Ovary (tissue), 10 donors: ENCODE measurements at regions of chr14 and their contacts with region 1.

Region 1: GRCh38 chr14:104768437-104769323 is 15.7 kb downstream of the SIVA1 start:
- DNase-seq: peak; percentile 84 to 93 (median 91)
- H3K4me3 ChIP-seq: no peak overlapping the region
- H3K27ac ChIP-seq: peak overlapping the region in 1 of 2 donors; percentile 57
- H3K4me1 ChIP-seq: peaks cover 2% of the 10 kb centered on the region
- H3K27me3 ChIP-seq: no peaks in the 10 kb centered on the region
- CTCF ChIP-seq: peak; percentile 73 to 95 (median 83)
- EP300 ChIP-seq: no peak
- POLR2A ChIP-seq: no peak

Region 2: DNA sequence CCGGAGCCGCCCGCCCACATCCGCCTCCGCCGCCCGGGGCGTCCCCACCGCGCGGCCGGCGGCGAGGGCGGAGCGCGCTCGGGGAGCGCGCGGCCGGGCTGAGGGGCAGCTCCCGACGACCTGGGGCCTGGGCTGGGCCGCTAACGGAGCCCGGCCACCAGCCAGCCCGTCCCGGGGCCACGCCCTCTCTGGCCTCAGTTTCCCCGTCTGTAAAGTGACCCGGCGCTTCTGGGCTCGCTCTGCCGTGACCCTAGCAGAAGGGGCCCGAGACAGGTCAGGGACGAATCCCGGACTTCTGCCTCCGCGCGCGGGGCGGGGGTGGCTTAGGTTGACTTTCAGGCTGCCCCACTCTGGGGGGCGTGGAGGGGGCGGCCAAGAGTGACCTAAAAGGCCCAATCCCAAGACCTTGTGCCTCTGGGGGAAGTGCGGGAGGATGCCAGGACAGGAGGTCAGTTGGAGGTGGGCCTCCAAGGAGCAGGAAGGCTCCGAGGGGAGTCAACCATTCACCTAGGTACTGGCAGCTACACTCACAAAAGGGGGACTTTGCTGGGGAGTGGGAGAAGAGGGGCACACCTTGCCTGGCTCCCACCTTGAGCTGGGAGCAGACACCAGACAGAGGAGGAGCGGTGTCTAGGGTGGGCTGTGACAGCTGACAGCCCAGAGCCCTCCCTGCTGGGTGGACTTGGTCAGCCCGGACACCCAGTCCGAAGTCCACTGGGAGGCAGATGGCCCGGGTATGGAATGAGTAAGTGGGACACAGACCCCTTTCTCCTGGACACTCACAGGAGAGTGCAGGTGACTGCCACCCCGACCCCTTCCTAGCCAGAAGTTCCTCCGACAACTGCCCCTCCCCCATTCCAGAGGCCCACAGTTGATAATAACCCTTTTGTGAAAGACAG is 27.4 kb after region 1 on chr14:
- intact Hi-C with region 1: loop called in 1 of 4 experiments (anchors 2 kb)
- DNase-seq: peak; percentile 50 to 75 (median 73)
- H3K4me3 ChIP-seq: peak overlapping the region; percentile 49
- H3K27ac ChIP-seq: peak overlapping the region; percentile 69 to 92
- H3K4me1 ChIP-seq: peaks cover 14% of the 10 kb centered on the region
- H3K27me3 ChIP-seq: no peaks in the 10 kb centered on the region
- CTCF ChIP-seq: no peak
- EP300 ChIP-seq: no peak
- POLR2A ChIP-seq: peak; percentile 80

Region 3: GRCh38 chr14:104820669-104821228 is 52.1 kb after region 1 on chr14:
- intact Hi-C with region 1: loop called in 2 of 4 experiments (anchors 1 kb)
- DNase-seq: peak; percentile 46 to 73 (median 65)
- H3K4me3 ChIP-seq: no peak overlapping the region
- H3K27ac ChIP-seq: no peak overlapping the region
- H3K4me1 ChIP-seq: no peaks in the 10 kb centered on the region
- H3K27me3 ChIP-seq: no peaks in the 10 kb centered on the region
- CTCF ChIP-seq: peak in 2 of 3 donors; percentile 37 to 39
- EP300 ChIP-seq: no peak
- POLR2A ChIP-seq: no peak

Region 4: DNA sequence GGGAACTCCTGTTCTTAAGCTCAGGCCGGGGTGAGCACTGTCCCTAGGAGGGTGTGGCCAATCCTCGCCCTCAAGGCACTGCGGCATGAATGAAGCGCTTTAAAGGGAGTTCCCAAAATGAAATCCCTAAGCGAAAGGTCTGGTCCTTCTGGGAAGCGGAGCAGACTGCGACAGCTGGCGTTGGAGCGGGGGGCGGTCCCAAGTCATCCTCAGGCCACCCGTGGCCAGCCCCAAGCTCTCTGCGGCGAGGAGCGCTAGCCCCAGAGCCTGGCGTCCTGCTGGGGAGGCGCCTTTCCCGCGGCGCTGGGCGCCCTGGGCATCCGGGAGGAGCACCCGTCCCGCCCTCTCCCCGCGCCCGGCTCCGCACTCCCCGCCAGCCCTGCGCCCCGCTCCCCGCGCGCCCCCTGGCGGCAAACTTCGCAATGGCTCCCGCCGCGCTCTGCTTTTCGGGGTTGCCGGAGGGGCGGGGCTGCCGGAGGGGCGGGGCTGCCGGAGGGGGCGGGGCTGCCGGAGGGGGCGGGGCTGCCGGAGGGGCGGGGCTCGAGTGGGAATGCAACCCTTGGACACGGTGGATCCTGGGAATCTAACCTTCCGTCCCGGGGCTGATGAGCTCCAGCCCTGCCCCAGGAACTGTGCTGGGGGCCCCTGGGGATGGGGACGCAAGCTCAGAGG is 57.6 kb after region 1 on chr14:
- intact Hi-C with region 1: loop called (anchors 1 to 2 kb)
- DNase-seq: peak; percentile 88 to 97 (median 95)
- H3K4me3 ChIP-seq: peak overlapping the region; percentile 60
- H3K27ac ChIP-seq: no peak overlapping the region
- H3K4me1 ChIP-seq: peaks cover 6% of the 10 kb centered on the region
- H3K27me3 ChIP-seq: no peaks in the 10 kb centered on the region
- CTCF ChIP-seq: peak; percentile 76 to 90 (median 85)
- EP300 ChIP-seq: no peak
- POLR2A ChIP-seq: no peak

Region 5: DNA sequence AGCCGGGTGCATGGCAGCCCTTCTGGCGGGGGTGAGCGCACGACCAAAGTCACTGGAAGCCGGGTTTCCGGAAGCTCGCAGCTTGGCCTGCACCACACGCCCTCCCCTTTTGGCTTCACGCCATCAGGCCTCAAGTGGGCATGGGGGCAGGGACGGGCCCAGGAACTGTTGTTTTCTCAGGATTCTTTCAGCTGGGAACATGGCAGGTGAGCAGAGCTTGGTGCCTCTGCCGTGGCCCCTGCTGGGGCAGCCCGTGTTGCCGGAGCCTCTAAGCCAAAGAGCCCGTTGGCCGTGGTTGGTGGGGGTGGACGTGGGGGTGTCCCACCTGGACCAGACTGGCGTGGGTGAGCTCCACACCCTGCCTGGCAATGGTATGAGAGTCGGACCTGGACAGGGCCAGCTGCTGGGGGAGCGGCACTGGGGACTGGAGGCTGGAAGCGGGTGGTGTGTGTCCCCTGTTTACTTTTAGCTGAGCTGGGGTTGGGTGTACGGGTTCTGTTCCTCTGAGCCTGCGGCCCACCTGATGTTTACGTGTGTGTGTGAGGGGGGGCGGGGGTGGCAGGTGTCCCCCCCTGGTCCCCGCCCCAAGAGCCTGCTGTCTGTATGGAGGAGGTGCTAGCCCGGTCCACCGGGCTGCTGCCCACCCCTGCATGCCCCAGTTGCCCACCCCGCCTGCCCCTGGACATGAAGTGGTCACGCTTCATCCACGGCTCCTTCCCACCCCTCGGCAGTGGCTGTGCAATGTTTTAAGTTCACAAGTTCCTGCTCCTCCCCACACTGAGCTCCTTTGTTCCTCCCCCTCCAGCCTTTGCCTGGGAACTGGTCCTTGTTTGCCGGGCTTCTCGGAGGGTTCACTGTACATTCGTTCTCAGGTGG is 127.3 kb after region 1 on chr14:
- intact Hi-C with region 1: no loop called
- DNase-seq: peak; percentile 18 to 43 (median 29)
- H3K4me3 ChIP-seq: no peak overlapping the region
- H3K27ac ChIP-seq: no peak overlapping the region
- H3K4me1 ChIP-seq: no peaks in the 10 kb centered on the region
- H3K27me3 ChIP-seq: no peaks in the 10 kb centered on the region
- CTCF ChIP-seq: no peak
- EP300 ChIP-seq: no peak
- POLR2A ChIP-seq: no peak